ENCODE measurements at regions of chr3 and their contacts with region 1.

Region 1: GRCh38 chr3:132343018-132343612 is 25.9 kb downstream of the ACP3 start:
- DNase-seq: peak in 2 of 5 donors; percentile 23 to 28
- ATAC-seq: peak in 3 of 4 donors; percentile 66 to 70 (median 67)
- H3K4me3 ChIP-seq: peak overlapping the region in 2 of 12 donors; percentile 9 to 28
- H3K27ac ChIP-seq: no peak overlapping the region
- H3K4me1 ChIP-seq: peaks cover 0 to 9% (median 0%) of the 10 kb centered on the region in 12 donors
- H3K27me3 ChIP-seq: no peaks in the 10 kb centered on the region
- CTCF ChIP-seq: peak; percentile 56 to 80 (median 72)
- POLR2A ChIP-seq: no peak

Region 2: DNA sequence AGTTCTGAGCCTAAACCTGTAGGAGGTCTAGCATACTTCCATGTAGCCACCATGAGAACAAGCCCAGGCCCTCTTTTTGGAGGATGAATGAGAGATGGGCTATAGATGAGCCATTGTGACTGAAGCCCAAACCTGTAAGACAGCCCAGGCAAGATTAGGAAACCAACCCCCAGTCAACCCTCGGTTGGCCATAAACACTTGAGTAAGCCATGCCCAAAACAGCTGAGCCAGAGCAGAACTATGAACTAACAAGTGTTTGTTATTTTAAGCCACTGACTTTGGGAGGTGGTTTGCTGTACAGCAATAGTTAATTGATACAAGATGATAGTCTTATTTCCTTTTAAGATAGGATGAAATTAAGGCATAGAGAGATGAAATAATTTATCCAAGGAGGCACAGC is 295.9 kb before region 1 on chr3:
- intact Hi-C with region 1: loop called in 1 of 10 experiments (anchors 10 kb)
- DNase-seq: no peak
- ATAC-seq: no peak
- H3K4me3 ChIP-seq: no peak overlapping the region
- H3K27ac ChIP-seq: no peak overlapping the region
- H3K4me1 ChIP-seq: no peaks in the 10 kb centered on the region
- H3K27me3 ChIP-seq: no peaks in the 10 kb centered on the region
- CTCF ChIP-seq: no peak
- POLR2A ChIP-seq: no peak

Region 3: DNA sequence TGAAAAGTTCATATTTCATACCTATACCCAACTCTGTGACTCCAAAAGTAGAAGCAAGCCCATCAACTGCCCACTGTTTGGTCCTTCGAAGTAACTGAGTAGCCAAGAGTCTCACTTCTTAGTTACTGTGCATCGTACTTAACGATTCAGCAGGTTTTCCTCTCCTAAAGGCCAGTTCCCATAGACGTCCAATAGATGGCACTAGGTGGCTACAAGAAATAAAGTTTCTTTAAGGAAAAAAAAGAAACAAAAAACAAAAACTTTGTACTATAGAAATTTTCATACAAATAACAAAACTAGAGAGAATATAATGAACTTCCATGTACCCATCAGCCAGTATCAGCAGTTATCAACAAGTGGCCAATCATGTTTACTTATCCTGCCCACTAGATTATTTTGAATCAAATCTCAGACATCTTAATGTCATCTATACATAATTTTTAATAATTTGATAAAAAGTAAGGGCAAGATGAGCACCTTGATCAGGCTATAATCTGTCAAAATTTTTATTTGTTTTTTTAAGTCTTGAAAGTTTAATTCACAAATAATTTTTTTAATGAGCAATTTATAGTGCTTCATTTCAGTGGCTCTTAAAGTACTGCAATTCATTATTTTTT is 89.7 kb before region 1 on chr3:
- intact Hi-C with region 1: loop called (anchors 1 to 2 kb)
- DNase-seq: peak in 1 of 5 donors; percentile 6
- ATAC-seq: peak in 2 of 4 donors; percentile 50 to 61
- H3K4me3 ChIP-seq: no peak overlapping the region
- H3K27ac ChIP-seq: no peak overlapping the region
- H3K4me1 ChIP-seq: no peaks in the 10 kb centered on the region
- H3K27me3 ChIP-seq: no peaks in the 10 kb centered on the region
- CTCF ChIP-seq: peak; percentile 53 to 78 (median 68)
- POLR2A ChIP-seq: no peak

Region 4: GRCh38 chr3:132399054-132399929 is 56.2 kb after region 1 on chr3:
- intact Hi-C with region 1: loop called in 1 of 10 experiments (anchors 2 kb)
- DNase-seq: no peak
- ATAC-seq: peak in 3 of 4 donors; percentile 42 to 74 (median 62)
- H3K4me3 ChIP-seq: no peak overlapping the region
- H3K27ac ChIP-seq: no peak overlapping the region
- H3K4me1 ChIP-seq: peaks cover 0 to 5% (median 0%) of the 10 kb centered on the region in 12 donors
- H3K27me3 ChIP-seq: no peaks in the 10 kb centered on the region
- CTCF ChIP-seq: peak; percentile 59 to 82 (median 72)
- POLR2A ChIP-seq: no peak

Measured in heart left ventricle (tissue), 16 donors.